HepG2 (cell line): ENCODE measurements at regions of chr2 and their contacts with region 1.

Region 1: GRCh38 chr2:238462782-238463396 is 36.2 kb downstream of the ASB1 start:
- DNase-seq: peak; percentile 77
- ATAC-seq: peak; percentile 58
- H3K4me3 ChIP-seq: no peak overlapping the region
- H3K27ac ChIP-seq: no peak overlapping the region
- H3K4me1 ChIP-seq: peaks cover 38% of the 10 kb centered on the region
- H3K27me3 ChIP-seq: no peaks in the 10 kb centered on the region
- CTCF ChIP-seq: peak; percentile 84
- EP300 ChIP-seq: no peak
- POLR2A ChIP-seq: no peak
- RAD21 ChIP-seq: peak; percentile 77

Region 2: GRCh38 chr2:238203094-238203972 is 259.6 kb before region 1 on chr2 and contains the start of gene ILKAP:
- CTCF ChIA-PET with region 1: no interaction called
- POLR2A ChIA-PET with region 1: no interaction called
- in situ Hi-C with region 1: no loop called
- intact Hi-C with region 1: no loop called
- DNase-seq: peak; percentile 75
- ATAC-seq: peak; percentile 99
- H3K4me3 ChIP-seq: peak within 1 kb of the TSS; percentile 72 to 89 (median 81)
- H3K27ac ChIP-seq: peak within 1 kb of the TSS; percentile 59
- H3K4me1 ChIP-seq: peaks cover 44% of the 10 kb centered on the region
- H3K27me3 ChIP-seq: peaks cover 0 to 25% of the 10 kb centered on the region in 2 experiments; a peak in 2 of 5 replicates
- CTCF ChIP-seq: no peak
- EP300 ChIP-seq: no peak
- POLR2A ChIP-seq: peak; percentile 65 to 85
- RAD21 ChIP-seq: peak; percentile 43
- total RNA-seq, gene ILKAP: 28.8 and 33.1 TPM in 2 replicates

Region 3: DNA sequence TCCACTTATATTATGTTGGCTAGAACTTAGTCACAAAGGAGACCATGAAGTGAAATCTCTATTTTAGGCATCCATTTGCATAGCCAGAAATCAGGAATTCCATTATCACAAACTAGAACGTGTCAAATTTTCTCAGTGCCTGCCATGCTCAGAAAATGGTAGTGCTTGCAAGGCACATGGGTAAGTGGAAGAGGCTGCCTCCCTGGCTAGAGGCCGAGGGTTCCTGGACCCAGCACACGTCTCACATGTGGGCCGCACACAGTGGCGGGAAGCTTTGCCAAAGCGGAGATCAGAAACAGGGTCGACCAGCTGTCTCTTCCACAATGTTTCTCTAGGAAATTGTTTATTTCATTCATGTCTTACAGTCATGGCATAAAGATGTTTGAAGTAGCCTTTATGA is 100.3 kb before region 1 on chr2:
- CTCF ChIA-PET with region 1: interaction called, 87 read pairs
- POLR2A ChIA-PET with region 1: no interaction called
- in situ Hi-C with region 1: loop called (anchors 5 kb)
- intact Hi-C with region 1: no loop called
- DNase-seq: no peak
- ATAC-seq: no peak
- H3K4me3 ChIP-seq: no peak overlapping the region
- H3K27ac ChIP-seq: no peak overlapping the region
- H3K4me1 ChIP-seq: peaks cover 13% of the 10 kb centered on the region
- H3K27me3 ChIP-seq: no peaks in the 10 kb centered on the region
- CTCF ChIP-seq: no peak
- EP300 ChIP-seq: no peak
- POLR2A ChIP-seq: no peak
- RAD21 ChIP-seq: no peak

Region 4: DNA sequence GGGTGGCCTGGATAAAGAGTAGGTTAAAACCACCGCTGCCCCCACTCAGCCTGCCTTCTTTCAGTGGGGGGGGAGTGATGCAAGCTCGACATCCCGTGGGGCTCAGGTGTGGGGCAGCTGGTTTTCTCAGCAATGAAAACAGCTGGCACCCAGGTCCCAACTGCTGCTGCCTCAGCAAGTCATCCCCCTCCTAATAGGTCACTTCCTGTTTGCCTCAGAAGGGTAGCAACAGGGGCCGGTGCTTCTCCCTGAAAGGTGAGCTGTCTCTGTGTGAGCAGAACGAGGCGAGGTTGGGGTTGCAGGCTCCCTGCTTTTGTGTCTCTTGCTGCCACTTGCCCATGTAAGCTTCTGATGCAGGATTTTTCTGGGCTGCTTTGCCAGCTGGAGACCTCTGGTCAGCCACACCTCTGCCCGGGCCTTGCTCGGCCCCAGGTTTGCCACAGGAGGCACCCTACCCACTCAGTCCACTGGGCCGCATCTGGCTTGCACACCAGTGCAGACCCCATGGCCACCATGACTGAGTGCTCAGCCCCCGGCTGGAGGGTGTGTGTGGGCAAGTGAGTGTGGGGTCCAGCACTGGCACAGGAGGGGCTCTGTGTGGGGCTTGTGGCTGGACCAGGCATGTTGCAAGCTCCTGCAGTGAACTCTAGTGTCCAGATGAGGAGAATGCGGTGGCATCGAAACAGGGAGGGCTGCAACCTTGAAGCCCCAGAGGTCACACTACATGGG is 47.7 kb before region 1 on chr2:
- CTCF ChIA-PET with region 1: no interaction called
- POLR2A ChIA-PET with region 1: no interaction called
- in situ Hi-C with region 1: no loop called
- intact Hi-C with region 1: no loop called
- DNase-seq: no peak
- ATAC-seq: peak; percentile 88
- H3K4me3 ChIP-seq: no peak overlapping the region
- H3K27ac ChIP-seq: no peak overlapping the region
- H3K4me1 ChIP-seq: peaks cover 6% of the 10 kb centered on the region
- H3K27me3 ChIP-seq: no peaks in the 10 kb centered on the region
- CTCF ChIP-seq: peak; percentile 41
- EP300 ChIP-seq: no peak
- POLR2A ChIP-seq: no peak
- RAD21 ChIP-seq: 0 out of 2 replicates have a peak, but pooled peaks have one; percentile 24